ENCODE measurements at regions of chr17 and their contacts with region 1.

Region 1: GRCh38 chr17:37791447-37792399 is 46.9 kb upstream of the HNF1B start:
- DNase-seq: peak; percentile 73
- CTCF ChIP-seq: peak; percentile 64

Region 2: GRCh38 chr17:37650419-37651003 is 141.2 kb before region 1 on chr17:
- CTCF ChIA-PET with region 1: interaction called, 31 read pairs
- POLR2A ChIA-PET with region 1: no interaction called
- DNase-seq: peak; percentile 30
- CTCF ChIP-seq: peak; percentile 48

Region 3: DNA sequence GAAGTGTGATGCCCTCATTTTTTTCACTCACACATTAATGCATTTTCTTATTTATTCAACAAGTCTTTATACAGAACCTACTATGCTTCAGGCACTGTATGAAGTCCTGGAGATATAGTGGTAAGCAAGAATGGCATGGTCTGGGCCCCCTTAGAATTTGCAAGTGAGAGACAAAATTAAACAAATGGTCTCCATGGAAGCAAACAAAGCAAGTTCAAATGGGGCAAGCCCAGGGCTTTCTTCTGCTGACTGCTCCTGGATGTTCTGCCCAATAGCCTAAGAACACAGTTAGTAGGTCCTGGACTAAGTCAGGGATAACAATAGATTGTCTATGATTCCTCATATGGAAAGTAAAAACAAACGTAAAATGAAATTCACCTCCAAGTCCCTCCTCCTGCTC is 117.2 kb before region 1 on chr17:
- CTCF ChIA-PET with region 1: no interaction called
- POLR2A ChIA-PET with region 1: no interaction called
- DNase-seq: no peak
- CTCF ChIP-seq: no peak

Region 4: DNA sequence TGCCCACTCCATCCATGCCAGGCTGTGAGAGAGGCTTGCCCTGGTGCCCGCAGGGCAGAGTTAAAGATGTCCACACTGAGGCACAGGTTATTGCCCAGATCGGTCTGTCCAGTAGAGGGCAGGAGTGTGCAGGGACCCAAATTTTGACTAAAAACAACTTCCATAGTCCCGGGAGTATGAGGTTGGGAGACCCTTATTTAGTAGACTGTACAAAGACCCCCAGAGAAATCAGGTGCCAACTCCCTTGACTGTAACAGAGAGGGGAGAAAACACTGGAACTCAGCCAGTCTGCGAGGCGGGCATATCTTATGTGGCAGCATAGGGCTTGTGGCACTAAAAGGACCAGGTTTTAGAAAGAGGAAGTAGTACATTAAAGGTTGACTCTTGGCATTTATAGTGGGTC is 90.2 kb before region 1 on chr17:
- CTCF ChIA-PET with region 1: interaction called, 20 read pairs
- POLR2A ChIA-PET with region 1: no interaction called
- DNase-seq: peak; percentile 74
- CTCF ChIP-seq: peak; percentile 74

Region 5: GRCh38 chr17:37761059-37761458 is 30.7 kb before region 1 on chr17:
- CTCF ChIA-PET with region 1: interaction called, 10 read pairs
- POLR2A ChIA-PET with region 1: no interaction called
- DNase-seq: no peak
- CTCF ChIP-seq: no peak

Region 6: GRCh38 chr17:37779554-37779953 is 12.2 kb before region 1 on chr17:
- CTCF ChIA-PET with region 1: interaction called, 44 read pairs
- POLR2A ChIA-PET with region 1: no interaction called
- DNase-seq: no peak
- CTCF ChIP-seq: no peak

Region 7: DNA sequence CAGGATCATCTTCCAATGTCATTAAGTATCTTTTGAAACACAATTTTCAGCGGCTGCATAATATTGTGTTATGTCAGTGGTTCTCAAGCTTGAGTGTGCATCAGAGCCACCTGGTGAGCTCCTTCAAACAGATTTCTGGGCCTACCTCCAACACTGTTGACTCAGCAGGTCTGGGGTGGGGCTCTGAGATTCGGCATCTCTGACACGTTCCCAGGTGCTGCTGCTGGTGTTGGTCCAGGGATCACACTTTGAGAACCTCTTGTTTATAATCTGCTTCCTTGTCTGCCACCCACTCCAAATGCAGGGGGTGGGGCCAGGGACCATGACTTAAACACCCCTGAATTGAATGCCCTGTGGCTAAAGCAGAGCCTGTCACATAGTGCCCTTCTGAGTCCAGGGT is 27.0 kb after region 1 on chr17:
- CTCF ChIA-PET with region 1: interaction called, 42 read pairs
- POLR2A ChIA-PET with region 1: no interaction called
- DNase-seq: no peak
- CTCF ChIP-seq: no peak

Measured in GM10248 (cell line).